Breast epithelium (tissue), 4 donors: ENCODE measurements at regions of chr3 and their contacts with region 1.

Region 1: DNA sequence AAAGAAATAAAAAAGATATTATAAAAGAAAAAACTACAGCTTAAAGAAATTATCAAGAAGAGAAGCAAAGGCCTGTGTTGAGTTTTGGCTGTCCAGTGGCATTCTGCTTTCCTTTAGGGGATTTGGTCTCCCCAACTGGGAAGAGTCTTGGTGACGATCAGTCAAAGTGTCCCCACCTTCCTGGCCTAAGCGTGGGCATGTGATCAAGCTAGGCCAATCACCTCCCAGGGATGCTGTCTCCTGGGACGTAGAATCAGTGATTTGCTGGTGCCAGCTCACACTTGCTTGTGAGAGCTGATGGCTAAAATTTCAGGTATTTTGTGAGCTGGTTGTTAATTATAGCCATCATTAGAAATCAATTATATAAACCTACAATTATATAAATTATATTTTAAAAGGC is 69.5 kb downstream of the ATP2B2 start:
- DNase-seq: no peak
- H3K4me3 ChIP-seq: no peak overlapping the region
- H3K27ac ChIP-seq: no peak overlapping the region
- H3K4me1 ChIP-seq: no peaks in the 10 kb centered on the region
- H3K27me3 ChIP-seq: no peaks in the 10 kb centered on the region
- CTCF ChIP-seq: no peak
- POLR2A ChIP-seq: no peak

Region 2: DNA sequence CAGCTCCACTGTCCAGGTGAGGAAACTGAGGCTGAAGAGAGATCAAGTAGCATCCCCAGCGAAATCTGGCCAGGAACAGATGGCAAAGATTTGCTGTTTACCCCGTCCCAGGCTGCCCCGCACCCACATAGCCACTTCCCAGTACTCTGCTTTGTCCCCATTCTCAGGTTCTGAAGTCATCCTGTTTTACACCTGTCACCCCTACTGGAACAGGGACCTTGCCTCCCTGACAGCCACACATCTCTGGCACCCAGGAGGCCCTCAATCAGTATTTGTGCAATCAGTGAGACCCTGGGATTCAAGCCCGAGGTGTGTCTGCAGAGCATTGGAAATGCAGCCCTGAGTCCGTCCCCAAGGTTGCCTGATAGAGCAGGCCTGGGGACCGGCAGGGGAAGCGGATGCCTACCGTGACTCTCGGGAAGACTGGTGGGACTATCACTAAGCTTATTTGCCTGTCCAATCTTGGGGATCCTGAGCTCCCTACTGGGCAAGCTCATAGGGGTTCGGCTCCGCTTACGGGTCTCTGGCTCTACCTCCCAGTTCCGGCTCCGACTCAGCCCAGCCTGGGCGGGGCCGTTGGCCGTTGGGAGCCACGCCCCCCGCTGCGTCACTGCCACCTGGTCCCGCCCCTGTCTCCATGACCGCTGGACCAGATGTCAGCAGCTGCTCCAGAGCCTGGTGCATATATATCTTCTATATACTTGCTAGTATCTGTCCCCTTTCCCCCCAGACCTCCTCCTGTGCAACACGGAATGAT is 427.1 kb before region 1 on chr3:
- intact Hi-C with region 1: no loop called
- DNase-seq: peak; percentile 87
- H3K4me3 ChIP-seq: peak overlapping the region; percentile 33 to 74 (median 50)
- H3K27ac ChIP-seq: peak overlapping the region; percentile 79 to 85
- H3K4me1 ChIP-seq: peaks cover 10 to 11% of the 10 kb centered on the region in 2 donors
- H3K27me3 ChIP-seq: no peaks in the 10 kb centered on the region
- CTCF ChIP-seq: no peak
- POLR2A ChIP-seq: peak; percentile 32

Region 3: GRCh38 chr3:10480871-10481378 is 45.1 kb after region 1 on chr3:
- intact Hi-C with region 1: loop called (anchors 1 kb)
- DNase-seq: no peak
- H3K4me3 ChIP-seq: no peak overlapping the region
- H3K27ac ChIP-seq: no peak overlapping the region
- H3K4me1 ChIP-seq: no peaks in the 10 kb centered on the region
- H3K27me3 ChIP-seq: no peaks in the 10 kb centered on the region
- CTCF ChIP-seq: no peak
- POLR2A ChIP-seq: no peak